ENCODE measurements at regions of chr10 and their contacts with region 1.

Region 1: DNA sequence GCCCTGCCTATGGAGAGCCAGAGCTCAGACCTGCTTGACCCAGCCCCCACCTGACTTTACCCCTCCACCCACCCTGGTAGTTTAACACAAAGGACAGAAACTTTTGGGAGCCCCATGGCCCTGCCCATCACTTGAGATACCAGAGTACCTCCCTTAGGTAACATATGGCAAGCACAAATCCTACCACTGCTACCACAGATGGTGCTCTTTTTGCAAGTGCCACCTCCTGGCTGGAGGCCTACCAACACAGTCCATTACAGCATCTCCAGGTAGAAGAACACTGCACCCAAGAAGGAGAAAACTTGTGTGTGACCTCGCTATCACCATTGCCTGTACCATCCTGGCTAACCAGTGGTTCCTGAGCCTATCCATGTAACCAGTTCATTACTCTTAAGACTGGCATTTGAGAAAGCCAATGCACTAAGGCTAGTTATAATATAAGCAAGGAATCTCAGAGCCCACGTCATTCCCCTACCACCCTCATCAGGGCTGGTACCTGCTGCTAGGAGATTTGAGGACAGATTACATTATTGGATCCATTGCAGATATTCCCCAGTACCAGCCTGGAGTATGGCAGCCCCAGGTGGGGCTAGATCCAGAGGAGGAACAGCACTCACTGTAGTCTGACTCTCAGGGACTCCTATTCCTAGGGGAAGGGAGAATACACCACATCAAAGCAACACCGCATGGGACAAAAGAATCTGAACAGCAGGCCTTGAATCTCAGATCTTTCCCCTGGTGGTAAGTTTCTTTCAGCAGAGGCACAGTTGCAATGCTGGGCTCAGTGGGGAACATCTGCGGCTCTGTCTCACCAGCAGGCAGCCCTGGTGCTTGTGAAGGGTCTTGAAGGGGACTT is 110.8 kb upstream of the ARHGAP21 start:
- DNase-seq: no peak
- H3K4me3 ChIP-seq: no peak overlapping the region
- H3K27ac ChIP-seq: no peak overlapping the region
- H3K4me1 ChIP-seq: no peaks in the 10 kb centered on the region
- H3K27me3 ChIP-seq: no peaks in the 10 kb centered on the region
- CTCF ChIP-seq: no peak

Region 2: GRCh38 chr10:24811881-24812622 is 22.5 kb before region 1 on chr10:
- intact Hi-C with region 1: loop called (anchors 1 kb)
- DNase-seq: no peak
- H3K4me3 ChIP-seq: no peak overlapping the region
- H3K27ac ChIP-seq: no peak overlapping the region
- H3K4me1 ChIP-seq: no peaks in the 10 kb centered on the region
- H3K27me3 ChIP-seq: no peaks in the 10 kb centered on the region
- CTCF ChIP-seq: no peak

Measured in ascending aorta (tissue), 2 donors.